ENCODE measurements at regions of chr16 and their contacts with region 1.

Region 1: DNA sequence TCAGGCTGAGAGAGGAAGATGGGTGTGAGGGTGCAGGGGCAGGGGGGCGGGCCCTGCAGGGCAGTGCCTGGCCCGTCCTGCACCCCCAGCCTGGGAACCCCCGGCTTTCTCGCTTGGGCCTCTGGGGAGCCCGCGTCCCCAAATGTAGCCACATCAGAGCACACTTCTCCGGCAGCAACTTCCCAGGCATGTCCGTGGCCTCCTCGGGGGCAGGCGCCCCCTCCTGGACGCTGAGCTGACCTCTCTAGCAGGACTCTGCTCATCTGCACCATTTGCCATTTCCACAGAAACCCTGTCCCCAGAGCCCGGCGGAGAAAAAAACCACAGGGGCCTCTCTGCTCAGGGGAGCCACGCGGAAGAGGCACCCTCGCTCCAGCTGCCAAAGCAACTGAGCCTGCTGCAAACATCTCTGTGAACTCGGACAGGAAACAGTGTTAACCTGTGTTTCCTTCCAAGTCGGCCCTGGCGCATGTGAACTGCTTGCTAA is 63.4 kb downstream of the KLHDC4 start:
- DNase-seq: no peak
- H3K4me3 ChIP-seq: no peak overlapping the region
- CTCF ChIP-seq: peak; percentile 69

Region 2: GRCh38 chr16:87581833-87582203 is 120.5 kb before region 1 on chr16:
- CTCF ChIA-PET with region 1: interaction called, 10 read pairs
- POLR2A ChIA-PET with region 1: no interaction called
- DNase-seq: peak; percentile 87
- H3K4me3 ChIP-seq: no peak overlapping the region
- CTCF ChIP-seq: no peak

Region 3: GRCh38 chr16:87713451-87714229 is 11.3 kb after region 1 on chr16:
- CTCF ChIA-PET with region 1: interaction called, 18 read pairs
- POLR2A ChIA-PET with region 1: no interaction called
- DNase-seq: no peak
- H3K4me3 ChIP-seq: no peak overlapping the region
- CTCF ChIP-seq: no peak

Region 4: GRCh38 chr16:88045820-88046303 is 343.5 kb after region 1 on chr16:
- CTCF ChIA-PET with region 1: no interaction called
- POLR2A ChIA-PET with region 1: no interaction called
- DNase-seq: no peak
- H3K4me3 ChIP-seq: no peak overlapping the region
- CTCF ChIP-seq: no peak

Measured in AG04449 (cell line).